ENCODE measurements at regions of chr15 and their contacts with region 1.

Region 1: DNA sequence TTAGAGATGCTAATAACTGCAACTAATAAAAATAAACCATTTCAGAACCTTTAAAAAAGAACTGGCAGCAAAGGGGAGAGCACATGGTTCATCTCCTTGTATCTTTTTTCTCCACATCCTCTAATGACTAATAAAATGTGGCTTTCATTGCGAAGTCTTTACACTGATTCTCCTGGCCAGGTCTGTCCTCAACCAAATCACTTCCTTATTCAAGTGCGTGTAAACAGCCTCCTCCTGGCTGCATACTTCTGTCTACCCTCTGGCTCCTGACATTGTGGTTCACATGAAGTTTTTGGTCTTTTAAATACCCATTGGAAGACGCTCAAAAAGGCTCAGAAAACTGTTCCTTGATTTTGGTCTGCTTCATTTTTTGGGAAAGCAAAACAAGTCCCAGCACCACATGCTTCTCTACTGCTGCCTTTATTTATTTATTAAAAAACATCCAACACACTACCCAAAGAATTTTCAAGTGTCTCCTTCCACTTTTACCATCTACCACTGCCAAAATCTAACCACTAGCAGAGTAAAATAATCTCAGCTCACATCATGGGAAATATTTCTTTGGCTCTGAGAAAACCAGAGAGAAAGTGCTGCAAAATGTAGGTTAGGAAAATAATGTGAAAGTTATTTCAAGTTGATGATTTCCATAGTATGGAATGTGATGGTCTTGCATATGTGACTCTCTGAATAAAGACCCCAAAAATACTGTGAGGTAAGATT is 85.1 kb downstream of the EFL1 start:
- DNase-seq: peak; percentile 76
- H3K4me3 ChIP-seq: no peak overlapping the region
- CTCF ChIP-seq: no peak

Region 2: DNA sequence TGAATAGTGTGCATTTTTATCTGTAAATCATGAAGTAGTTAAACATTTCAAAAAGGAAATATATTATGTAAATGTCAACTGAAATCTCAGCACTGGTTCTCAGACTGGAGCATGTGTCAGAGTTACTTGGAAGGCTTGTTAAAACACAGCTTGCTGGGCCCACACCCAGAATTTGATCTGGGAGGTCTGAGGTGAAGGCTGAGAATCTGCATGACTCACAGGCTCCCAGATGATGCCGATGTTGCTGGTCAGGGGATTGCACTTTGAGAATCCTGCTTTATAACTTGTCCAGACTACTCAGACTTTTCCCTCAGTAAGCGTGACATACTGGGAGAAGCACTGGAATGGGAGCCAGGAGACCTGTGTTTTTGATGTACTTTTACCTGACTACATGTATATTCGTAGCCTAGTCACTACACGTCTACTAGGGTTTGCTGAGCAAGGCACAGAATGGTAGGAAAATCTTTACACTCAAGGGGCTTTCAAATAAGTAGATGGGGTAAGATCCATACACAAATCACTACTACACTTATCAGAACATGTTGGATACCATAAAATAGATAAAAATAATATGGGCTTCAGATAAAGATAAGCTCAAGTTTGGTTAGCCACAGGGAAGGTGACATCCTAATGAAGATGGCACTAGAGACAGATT is 54.6 kb before region 1 on chr15:
- in situ Hi-C with region 1: no loop called
- DNase-seq: peak; percentile 97
- H3K4me3 ChIP-seq: no peak overlapping the region
- CTCF ChIP-seq: no peak

Region 3: GRCh38 chr15:82139823-82140268 is 37.6 kb before region 1 on chr15:
- in situ Hi-C with region 1: loop called (anchors 5 kb)
- DNase-seq: no peak
- H3K4me3 ChIP-seq: no peak overlapping the region
- CTCF ChIP-seq: peak; percentile 74